ENCODE measurements at regions of chr6 and their contacts with region 1.

Region 1: GRCh38 chr6:20135677-20136268 is 76.5 kb downstream of the MBOAT1 start:
- DNase-seq: no peak
- H3K4me3 ChIP-seq: no peak overlapping the region
- H3K27ac ChIP-seq: no peak overlapping the region
- H3K4me1 ChIP-seq: no peaks in the 10 kb centered on the region
- H3K27me3 ChIP-seq: no peaks in the 10 kb centered on the region
- CTCF ChIP-seq: no peak

Region 2: GRCh38 chr6:18835976-18836375 is 1299.8 kb before region 1 on chr6:
- CTCF ChIA-PET with region 1: interaction called, 13 read pairs
- POLR2A ChIA-PET with region 1: no interaction called
- intact Hi-C with region 1: no loop called
- DNase-seq: no peak
- H3K4me3 ChIP-seq: no peak overlapping the region
- H3K27ac ChIP-seq: no peak overlapping the region
- H3K4me1 ChIP-seq: no peaks in the 10 kb centered on the region
- H3K27me3 ChIP-seq: no peaks in the 10 kb centered on the region
- CTCF ChIP-seq: no peak

Region 3: GRCh38 chr6:20159781-20160540 is 24.2 kb after region 1 on chr6:
- CTCF ChIA-PET with region 1: interaction called, 14 read pairs
- POLR2A ChIA-PET with region 1: no interaction called
- intact Hi-C with region 1: no loop called
- DNase-seq: no peak
- H3K4me3 ChIP-seq: no peak overlapping the region
- H3K27ac ChIP-seq: no peak overlapping the region
- H3K4me1 ChIP-seq: no peaks in the 10 kb centered on the region
- H3K27me3 ChIP-seq: no peaks in the 10 kb centered on the region
- CTCF ChIP-seq: no peak

Region 4: GRCh38 chr6:20366091-20366832 is 230.5 kb after region 1 on chr6:
- CTCF ChIA-PET with region 1: no interaction called
- POLR2A ChIA-PET with region 1: no interaction called
- intact Hi-C with region 1: no loop called
- DNase-seq: no peak
- H3K4me3 ChIP-seq: no peak overlapping the region
- H3K27ac ChIP-seq: no peak overlapping the region
- H3K4me1 ChIP-seq: no peaks in the 10 kb centered on the region
- H3K27me3 ChIP-seq: peaks cover 8% of the 10 kb centered on the region; the same call in 1 of the 2 replicates
- CTCF ChIP-seq: no peak

Measured in PC-9 (cell line).